Stomach (tissue), 19 donors: ENCODE measurements at regions of chrX and their contacts with region 1.

Region 1: DNA sequence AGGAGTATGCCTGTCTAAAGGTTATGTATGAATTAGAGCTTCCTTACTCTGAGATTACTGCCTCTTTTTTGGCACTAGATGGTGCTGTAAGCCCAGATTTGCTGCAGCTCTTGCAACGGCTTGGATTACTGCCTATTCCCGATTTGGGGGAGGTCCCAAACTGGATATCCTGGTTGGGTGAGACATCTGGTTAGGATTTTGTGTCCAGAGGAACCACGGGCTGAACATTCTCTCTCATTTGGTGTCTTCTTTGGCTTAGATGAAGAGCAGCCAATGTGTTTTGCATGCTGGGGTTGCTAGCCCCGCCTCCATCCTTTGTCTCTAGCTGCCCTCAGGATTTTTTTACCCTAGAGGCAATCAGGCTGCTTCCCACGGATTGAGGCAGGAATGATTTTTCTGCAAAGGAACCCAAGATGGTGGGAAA is 31.9 kb downstream of the F8A1 start:
- DNase-seq: peak; percentile 32 to 87
- H3K4me3 ChIP-seq: peak overlapping the region in 3 of 4 donors; percentile 9 to 20 (median 17)
- H3K27ac ChIP-seq: no peak overlapping the region
- H3K4me1 ChIP-seq: peaks cover 0 to 6% (median 0%) of the 10 kb centered on the region in 4 donors
- H3K27me3 ChIP-seq: no peaks in the 10 kb centered on the region
- CTCF ChIP-seq: peak in 5 of 7 experiments; percentile 11 to 44 (median 30)
- EP300 ChIP-seq: no peak
- POLR2A ChIP-seq: no peak

Region 2: GRCh38 chrX:154695911-154696675 is 222.0 kb before region 1 on chrX:
- intact Hi-C with region 1: no loop called
- DNase-seq: peak in 1 of 2 donors; percentile 36
- H3K4me3 ChIP-seq: no peak overlapping the region
- H3K27ac ChIP-seq: no peak overlapping the region
- H3K4me1 ChIP-seq: no peaks in the 10 kb centered on the region
- H3K27me3 ChIP-seq: no peaks in the 10 kb centered on the region
- CTCF ChIP-seq: no peak
- EP300 ChIP-seq: no peak
- POLR2A ChIP-seq: no peak

Region 3: DNA sequence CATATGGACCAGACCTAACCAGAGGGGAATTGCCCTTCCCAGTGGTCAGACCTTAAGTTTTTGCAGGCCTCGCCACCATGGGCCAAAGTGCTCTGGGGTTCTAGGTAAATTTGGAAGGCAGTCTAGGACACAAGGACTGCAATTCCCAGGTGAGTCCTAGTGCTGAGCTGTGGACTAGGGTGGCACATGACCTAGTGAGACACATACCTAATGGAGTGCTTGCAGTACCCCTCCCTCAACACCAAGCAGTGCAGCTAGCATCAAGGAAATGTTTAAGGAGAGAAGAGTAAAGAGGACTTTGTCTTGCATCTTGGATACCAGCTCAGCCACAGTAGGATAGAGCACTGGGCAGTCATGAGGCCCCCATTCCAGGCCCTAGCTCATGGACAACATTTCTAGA is 214.0 kb after region 1 on chrX:
- intact Hi-C with region 1: loop called (anchors 10 kb)
- DNase-seq: no peak
- H3K4me3 ChIP-seq: no peak overlapping the region
- H3K27ac ChIP-seq: no peak overlapping the region
- H3K4me1 ChIP-seq: no peaks in the 10 kb centered on the region
- H3K27me3 ChIP-seq: no peaks in the 10 kb centered on the region
- CTCF ChIP-seq: no peak
- EP300 ChIP-seq: no peak
- POLR2A ChIP-seq: no peak